Activated naive CD4-positive, alpha-beta T cell treated with anti-CD3 and anti-CD28 coated beads for 36 hours (primary cell): ENCODE measurements at regions of chr12 and their contacts with region 1.

Region 1: DNA sequence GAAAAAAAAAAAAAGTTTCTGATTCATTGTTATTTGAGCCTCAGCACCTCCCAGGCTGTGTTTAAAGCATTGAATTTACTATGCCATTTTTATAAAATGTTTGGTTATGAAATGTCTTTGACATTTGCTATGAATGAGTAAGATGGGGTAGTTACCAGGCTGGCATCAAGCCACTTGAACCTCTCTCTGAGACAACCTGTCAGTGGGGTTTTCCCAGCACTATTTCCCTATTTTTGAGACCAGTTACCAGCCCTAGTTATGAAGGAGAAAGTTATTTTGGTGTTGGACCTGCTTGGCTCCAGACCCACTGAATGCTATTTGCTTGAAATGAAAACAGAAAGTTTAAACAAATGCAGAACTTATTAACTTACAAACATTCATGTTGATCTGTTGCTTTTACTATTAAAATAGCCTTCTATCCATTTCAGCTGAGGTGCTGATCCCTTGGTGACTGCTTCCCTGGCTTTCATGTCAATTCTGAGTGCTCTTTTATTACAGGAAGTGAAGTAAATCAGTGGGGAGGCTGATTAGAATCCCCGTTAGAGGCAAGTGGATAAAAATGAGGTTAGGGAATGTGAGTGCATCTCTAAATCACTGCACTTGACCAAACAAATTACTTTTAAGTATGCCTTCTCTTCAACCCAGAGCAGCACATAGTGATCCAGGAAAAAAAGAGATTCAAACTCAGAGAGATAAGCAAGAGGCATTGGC is 37.8 kb downstream of the LLPH start:
- DNase-seq: peak; percentile 32
- H3K4me3 Mint-ChIP-seq: no peak overlapping the region
- H3K27ac Mint-ChIP-seq: no peak overlapping the region
- H3K4me1 Mint-ChIP-seq: no peaks in the 10 kb centered on the region
- H3K27me3 Mint-ChIP-seq: peaks cover 10% of the 10 kb centered on the region

Region 2: DNA sequence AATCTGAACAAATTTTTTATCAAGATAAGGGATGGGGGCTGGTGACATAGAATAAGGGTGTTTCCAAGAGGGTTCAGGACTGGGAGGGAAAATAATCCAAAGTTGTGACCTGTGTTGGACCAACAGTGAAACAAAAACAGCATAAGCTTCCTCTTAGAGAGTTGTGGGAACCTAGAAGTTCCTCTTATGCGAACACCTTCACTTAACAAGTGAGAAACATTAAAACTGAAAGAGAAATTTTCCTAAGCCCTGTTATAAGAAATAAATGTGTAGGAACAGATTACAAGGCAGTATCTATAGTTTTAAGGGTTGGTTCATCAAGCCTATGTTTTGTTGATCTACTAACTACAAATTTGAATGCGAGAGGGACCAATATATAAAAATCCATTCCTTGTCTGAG is 20.6 kb before region 1 on chr12:
- CTCF ChIA-PET with region 1: no interaction called
- intact Hi-C with region 1: no loop called
- DNase-seq: no peak
- H3K4me3 Mint-ChIP-seq: no peak overlapping the region
- H3K27ac Mint-ChIP-seq: no peak overlapping the region
- H3K4me1 Mint-ChIP-seq: peaks cover 4% of the 10 kb centered on the region
- H3K27me3 Mint-ChIP-seq: peaks cover 12% of the 10 kb centered on the region

Region 3: GRCh38 chr12:66107451-66107915 is 14.8 kb after region 1 on chr12:
- CTCF ChIA-PET with region 1: interaction called, 5 read pairs
- intact Hi-C with region 1: loop called (anchors 2 kb)
- DNase-seq: peak; percentile 59
- H3K4me3 Mint-ChIP-seq: no peak overlapping the region
- H3K27ac Mint-ChIP-seq: no peak overlapping the region
- H3K4me1 Mint-ChIP-seq: peaks cover 4% of the 10 kb centered on the region
- H3K27me3 Mint-ChIP-seq: peaks cover 4% of the 10 kb centered on the region